ENCODE measurements at regions of chr1 and their contacts with region 1.

Region 1: GRCh38 chr1:112544011-112544688 is 35.4 kb downstream of the WNT2B start:
- DNase-seq: peak; percentile 82
- H3K4me3 ChIP-seq: peak overlapping the region in 1 of 3 experiments; percentile 18
- H3K27ac ChIP-seq: peak overlapping the region; percentile 93
- H3K4me1 ChIP-seq: peaks cover 17% of the 10 kb centered on the region
- H3K27me3 ChIP-seq: no peaks in the 10 kb centered on the region
- CTCF ChIP-seq: no peak

Region 2: DNA sequence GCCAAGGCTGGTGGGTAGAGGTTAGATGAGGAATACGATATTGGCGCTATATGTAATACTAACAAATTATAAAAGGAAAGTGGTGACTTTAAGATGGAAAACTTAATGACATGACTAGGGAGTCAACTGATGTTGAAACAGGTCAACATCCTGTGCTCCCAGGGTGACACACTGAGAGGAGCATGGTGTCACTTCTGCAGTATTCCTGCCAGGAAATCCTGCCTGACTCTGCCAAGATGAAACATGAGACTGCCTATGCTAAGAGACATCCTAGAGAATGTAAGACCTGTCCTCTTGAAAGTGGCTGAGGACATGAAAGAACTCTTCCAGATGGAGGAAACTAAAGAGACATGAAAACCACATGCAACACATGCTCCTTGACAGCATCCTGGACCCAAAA is 489.6 kb before region 1 on chr1:
- CTCF ChIA-PET with region 1: no interaction called
- dilution Hi-C with region 1: no loop called
- in situ Hi-C with region 1: no loop called
- intact Hi-C with region 1: no loop called
- DNase-seq: no peak
- H3K4me3 ChIP-seq: no peak overlapping the region
- H3K27ac ChIP-seq: no peak overlapping the region
- H3K4me1 ChIP-seq: peaks cover 12% of the 10 kb centered on the region
- H3K27me3 ChIP-seq: no peaks in the 10 kb centered on the region
- CTCF ChIP-seq: no peak

Region 3: DNA sequence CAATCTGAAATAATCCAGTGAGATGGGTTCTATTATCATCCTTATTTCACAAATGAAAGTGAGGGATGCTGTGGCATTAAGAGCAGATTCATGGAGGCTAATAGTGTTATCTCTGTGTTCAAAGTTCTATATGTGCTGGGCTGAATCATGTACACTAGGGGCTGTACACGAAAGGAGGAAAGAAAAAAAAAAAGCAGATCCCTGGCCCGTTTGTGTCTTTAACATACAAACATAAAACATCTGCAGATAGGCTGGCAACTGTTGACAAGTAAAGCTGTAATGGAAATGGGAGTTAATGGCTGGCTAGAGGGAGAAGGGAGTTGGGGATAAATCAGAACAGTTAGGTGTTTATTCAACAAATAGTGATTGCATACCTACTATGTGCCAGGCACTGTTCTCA is 32.3 kb before region 1 on chr1:
- CTCF ChIA-PET with region 1: no interaction called
- dilution Hi-C with region 1: no loop called
- in situ Hi-C with region 1: no loop called
- intact Hi-C with region 1: no loop called
- DNase-seq: no peak
- H3K4me3 ChIP-seq: no peak overlapping the region
- H3K27ac ChIP-seq: no peak overlapping the region
- H3K4me1 ChIP-seq: peaks cover 18% of the 10 kb centered on the region
- H3K27me3 ChIP-seq: peaks cover 6% of the 10 kb centered on the region
- CTCF ChIP-seq: no peak

Region 4: GRCh38 chr1:112581530-112582192 is 37.5 kb after region 1 on chr1:
- CTCF ChIA-PET with region 1: no interaction called
- dilution Hi-C with region 1: no loop called
- in situ Hi-C with region 1: no loop called
- intact Hi-C with region 1: no loop called
- DNase-seq: peak; percentile 9
- H3K4me3 ChIP-seq: no peak overlapping the region
- H3K27ac ChIP-seq: peak overlapping the region; percentile 22
- H3K4me1 ChIP-seq: no peaks in the 10 kb centered on the region
- H3K27me3 ChIP-seq: no peaks in the 10 kb centered on the region
- CTCF ChIP-seq: no peak

Region 5: DNA sequence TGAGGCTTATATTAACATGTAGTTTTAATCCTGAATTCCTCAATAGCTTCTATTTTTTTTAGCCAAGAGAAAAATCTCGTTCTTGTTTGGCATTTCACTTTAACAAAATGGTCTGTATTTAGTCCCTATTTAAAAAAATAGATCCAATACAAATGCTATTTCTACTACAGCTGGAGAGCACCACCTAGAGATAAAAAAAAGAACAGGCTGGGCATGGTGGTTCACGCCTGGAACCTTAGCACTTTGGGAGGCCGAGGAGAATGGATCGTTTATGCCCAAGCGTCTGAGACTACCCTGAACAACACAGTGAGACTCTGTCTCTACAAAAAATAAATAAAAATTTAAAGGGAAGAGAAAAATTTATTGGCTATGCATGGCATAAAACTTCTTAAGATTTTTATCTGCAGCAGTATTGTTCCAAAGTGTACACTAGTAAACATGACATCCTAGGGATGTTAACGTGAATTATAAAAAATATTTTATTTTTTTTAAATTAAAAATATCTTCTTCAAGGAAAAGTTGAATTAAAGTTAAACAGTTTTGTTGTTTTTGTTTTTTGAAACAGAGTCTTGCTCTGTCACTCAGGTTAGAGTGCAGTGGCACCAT is 70.4 kb after region 1 on chr1:
- CTCF ChIA-PET with region 1: no interaction called
- dilution Hi-C with region 1: no loop called
- in situ Hi-C with region 1: no loop called
- intact Hi-C with region 1: loop called (anchors 5 kb)
- DNase-seq: no peak
- H3K4me3 ChIP-seq: no peak overlapping the region
- H3K27ac ChIP-seq: no peak overlapping the region
- H3K4me1 ChIP-seq: peaks cover 14% of the 10 kb centered on the region
- H3K27me3 ChIP-seq: no peaks in the 10 kb centered on the region
- CTCF ChIP-seq: peak; percentile 53 to 68

Measured in mammary epithelial cell (primary cell).